ENCODE measurements at regions of chr11 and their contacts with region 1.

Region 1: GRCh38 chr11:65013692-65014145 is 241 bp upstream of the ARL2 start:
- DNase-seq: peak; percentile 74 to 95 (median 89)
- ATAC-seq: peak; percentile 91
- H3K4me3 ChIP-seq: peak overlapping the region; percentile 73 to 94
- H3K4me3 Mint-ChIP-seq: peak overlapping the region; percentile 88
- H3K27ac ChIP-seq: peak overlapping the region; percentile 87 to 100
- H3K27ac Mint-ChIP-seq: peak overlapping the region; percentile 96
- H3K4me1 ChIP-seq: peaks cover 24% of the 10 kb centered on the region
- H3K4me1 Mint-ChIP-seq: peaks cover 24% of the 10 kb centered on the region
- H3K27me3 ChIP-seq: no peaks in the 10 kb centered on the region
- H3K27me3 Mint-ChIP-seq: no peaks in the 10 kb centered on the region
- CTCF ChIP-seq: peak; percentile 58

Region 2: DNA sequence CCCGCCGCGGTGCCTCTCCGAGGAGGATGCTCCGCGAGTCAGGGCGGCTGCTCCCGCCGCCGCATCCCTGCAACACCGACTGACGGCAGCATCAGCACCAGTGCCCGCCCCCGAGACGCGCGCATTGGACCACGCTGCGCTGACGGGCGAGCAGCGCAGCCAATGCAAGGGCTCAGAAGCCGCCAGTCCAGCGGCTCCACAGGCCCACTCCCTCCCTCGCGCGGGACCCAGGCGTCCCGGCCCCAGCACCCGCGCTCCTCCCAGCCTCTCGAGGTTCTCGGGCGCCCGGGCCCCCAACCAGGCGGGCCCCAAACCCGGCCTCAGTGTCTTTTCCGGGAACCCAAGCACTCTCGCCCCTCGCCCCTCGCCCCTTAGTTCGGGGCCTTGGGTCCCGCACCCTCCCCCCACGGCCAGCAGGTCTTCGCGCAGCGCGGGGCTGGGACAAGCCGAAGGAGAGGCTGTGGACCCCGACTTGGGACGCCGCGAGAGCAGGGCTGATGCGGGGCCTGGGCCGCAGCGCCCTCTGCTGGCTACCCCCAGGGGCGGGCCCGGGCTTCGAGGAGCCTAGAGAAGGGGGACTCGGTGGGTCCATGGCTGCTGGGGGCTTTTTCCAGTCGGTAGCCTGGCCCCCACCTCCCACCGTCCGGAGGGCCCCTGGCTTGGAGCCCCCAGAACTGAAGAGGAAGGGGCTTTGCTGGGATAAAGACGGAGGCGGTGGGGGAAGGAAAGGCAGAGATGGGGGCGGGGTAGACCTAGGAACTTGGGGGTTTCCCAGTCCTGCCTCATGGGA is 290.4 kb before region 1 on chr11 and contains the start of gene NRXN2:
- CTCF ChIA-PET with region 1: no interaction called
- POLR2A ChIA-PET with region 1: no interaction called
- intact Hi-C with region 1: loop called in 1 of 2 experiments (anchors 1 kb)
- DNase-seq: peak; percentile 62 to 94 (median 83)
- ATAC-seq: peak; percentile 94
- H3K4me3 ChIP-seq: peak within 1 kb of the TSS; percentile 71 to 78
- H3K4me3 Mint-ChIP-seq: peak within 1 kb of the TSS; percentile 70
- H3K27ac ChIP-seq: peak within 1 kb of the TSS; percentile 49 to 71
- H3K27ac Mint-ChIP-seq: no peak within 1 kb of the TSS
- H3K4me1 ChIP-seq: peaks cover 21% of the 10 kb centered on the region
- H3K4me1 Mint-ChIP-seq: peaks cover 18% of the 10 kb centered on the region
- H3K27me3 ChIP-seq: peaks cover 0 to 7% of the 10 kb centered on the region in 2 experiments
- H3K27me3 Mint-ChIP-seq: peaks cover 9% of the 10 kb centered on the region
- CTCF ChIP-seq: peak; percentile 97
- total RNA-seq, gene NRXN2: 0.17 to 0.43 TPM

Region 3: DNA sequence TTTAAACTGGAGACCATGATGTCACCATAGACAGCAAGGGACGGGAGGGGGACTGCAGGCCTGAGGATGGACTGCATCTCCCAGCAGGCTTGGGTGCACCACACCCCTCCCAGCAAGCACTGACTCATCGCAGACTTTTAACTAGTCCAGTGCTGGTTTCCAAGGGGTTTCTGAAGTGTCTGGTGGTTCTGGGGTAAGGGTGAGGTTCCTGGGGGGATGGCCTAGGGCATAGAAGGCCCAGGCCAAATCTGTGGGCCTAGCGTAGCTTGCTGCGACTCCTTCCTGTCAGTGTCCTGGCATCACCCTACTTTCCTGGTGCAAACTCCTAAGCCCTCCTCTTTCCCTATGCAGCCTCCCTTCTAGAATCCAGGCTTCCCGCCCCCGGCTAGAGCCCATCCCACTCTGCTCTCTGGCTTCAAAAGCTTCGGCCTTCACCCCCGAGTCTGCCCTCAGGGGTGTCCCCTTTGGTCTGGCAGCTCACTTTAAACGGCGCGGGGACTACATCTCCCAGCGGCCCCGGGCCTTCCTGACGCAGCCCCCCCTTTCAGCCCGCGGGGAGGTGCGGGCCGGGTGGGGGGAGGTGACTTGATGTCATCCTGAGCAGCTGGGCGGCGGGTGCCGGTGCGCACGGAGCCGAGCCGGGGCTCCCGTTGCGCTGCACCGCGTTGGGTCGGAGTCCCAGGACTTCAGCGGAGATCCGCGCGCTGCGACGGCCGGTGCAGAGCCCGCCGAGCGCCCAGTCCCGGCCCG is 89.4 kb before region 1 on chr11 and contains the start of gene PPP2R5B:
- CTCF ChIA-PET with region 1: no interaction called
- POLR2A ChIA-PET with region 1: interaction called, 8 read pairs
- intact Hi-C with region 1: loop called (anchors 1 kb)
- DNase-seq: peak; percentile 78 to 94 (median 90)
- ATAC-seq: peak; percentile 94
- H3K4me3 ChIP-seq: peak within 1 kb of the TSS; percentile 69 to 76
- H3K4me3 Mint-ChIP-seq: peak within 1 kb of the TSS; percentile 95
- H3K27ac ChIP-seq: peak within 1 kb of the TSS; percentile 58 to 92
- H3K27ac Mint-ChIP-seq: peak within 1 kb of the TSS; percentile 96
- H3K4me1 ChIP-seq: peaks cover 19% of the 10 kb centered on the region
- H3K4me1 Mint-ChIP-seq: peaks cover 15% of the 10 kb centered on the region
- H3K27me3 ChIP-seq: no peaks in the 10 kb centered on the region
- H3K27me3 Mint-ChIP-seq: no peaks in the 10 kb centered on the region
- CTCF ChIP-seq: no peak
- total RNA-seq, gene PPP2R5B: 14.8 to 18.0 TPM

Region 4: GRCh38 chr11:65040847-65041621 is 27.3 kb after region 1 on chr11 and contains the start of gene SAC3D1:
- CTCF ChIA-PET with region 1: interaction called, 19 read pairs
- POLR2A ChIA-PET with region 1: interaction called, 3 read pairs
- intact Hi-C with region 1: loop called (anchors 1 kb)
- DNase-seq: peak; percentile 67 to 94 (median 85)
- ATAC-seq: peak; percentile 90
- H3K4me3 ChIP-seq: peak within 1 kb of the TSS; percentile 63 to 76
- H3K4me3 Mint-ChIP-seq: peak within 1 kb of the TSS; percentile 93
- H3K27ac ChIP-seq: peak within 1 kb of the TSS; percentile 34 to 82
- H3K27ac Mint-ChIP-seq: peak within 1 kb of the TSS; percentile 91
- H3K4me1 ChIP-seq: peaks cover 17% of the 10 kb centered on the region
- H3K4me1 Mint-ChIP-seq: peaks cover 15% of the 10 kb centered on the region
- H3K27me3 ChIP-seq: no peaks in the 10 kb centered on the region
- H3K27me3 Mint-ChIP-seq: no peaks in the 10 kb centered on the region
- CTCF ChIP-seq: no peak
- total RNA-seq, gene SAC3D1: 0.57 to 0.94 TPM

Region 5: DNA sequence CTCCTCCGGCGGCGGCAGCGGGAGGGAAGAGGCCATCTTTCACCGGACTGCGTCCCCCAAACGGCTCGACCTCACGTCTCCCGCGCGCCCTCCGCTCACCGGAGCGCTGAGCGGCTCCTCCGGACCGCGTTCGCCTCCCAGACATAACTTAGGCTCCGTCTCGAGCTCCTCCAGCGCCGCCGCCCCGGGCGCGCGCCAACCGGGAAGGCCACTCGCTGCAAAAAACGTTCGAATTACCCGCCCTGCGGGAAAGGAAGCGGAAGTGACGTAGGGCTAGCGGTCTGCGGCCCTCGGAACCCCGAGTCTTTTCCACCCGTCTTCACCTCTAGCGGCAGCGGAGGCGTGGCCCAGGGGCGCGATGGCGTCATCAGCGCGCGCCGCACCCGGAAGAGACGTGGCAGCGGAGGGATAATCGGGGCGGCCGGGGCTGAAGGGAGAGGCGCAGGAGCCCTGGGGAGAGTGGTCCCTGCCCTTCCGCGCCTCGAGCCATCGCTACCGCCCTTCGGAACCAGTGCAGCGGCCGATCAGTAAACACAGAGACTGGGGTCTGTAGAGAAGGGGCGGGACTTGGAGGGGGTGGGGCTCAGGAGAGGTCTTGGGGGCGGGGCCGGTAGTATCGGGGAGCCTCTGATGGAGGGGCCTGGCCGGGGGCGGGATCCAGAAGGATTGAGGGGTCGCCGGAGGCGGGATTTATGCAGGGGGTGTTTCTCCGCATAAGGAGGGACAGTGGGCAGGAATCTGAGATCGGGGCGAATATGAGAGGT is 70.3 kb after region 1 on chr11 and contains the starts of genes CDCA5 and ZFPL1:
- CTCF ChIA-PET with region 1: interaction called, 11 read pairs
- POLR2A ChIA-PET with region 1: no interaction called
- intact Hi-C with region 1: loop called (anchors 1 kb)
- DNase-seq: peak; percentile 94 to 98 (median 96)
- ATAC-seq: peak; percentile 88
- H3K4me3 ChIP-seq: peak within 1 kb of the TSS; percentile 71 to 87
- H3K4me3 Mint-ChIP-seq: peak within 1 kb of the TSS; percentile 93
- H3K27ac ChIP-seq: peak within 1 kb of the TSS; percentile 90 to 97
- H3K27ac Mint-ChIP-seq: peak within 1 kb of the TSS; percentile 99
- H3K4me1 ChIP-seq: peaks cover 17% of the 10 kb centered on the region
- H3K4me1 Mint-ChIP-seq: peaks cover 27% of the 10 kb centered on the region
- H3K27me3 ChIP-seq: no peaks in the 10 kb centered on the region
- H3K27me3 Mint-ChIP-seq: no peaks in the 10 kb centered on the region
- CTCF ChIP-seq: no peak
- total RNA-seq, gene CDCA5: 0.76 to 1.2 TPM
- total RNA-seq, gene ZFPL1: 52.3 to 52.6 TPM

Region 6: GRCh38 chr11:65117216-65118096 is 103.7 kb after region 1 on chr11 and contains the start of gene ZNHIT2:
- CTCF ChIA-PET with region 1: interaction called, 84 read pairs
- POLR2A ChIA-PET with region 1: interaction called, 13 read pairs
- intact Hi-C with region 1: loop called (anchors 1 kb)
- DNase-seq: peak; percentile 99 to 100 (median 100)
- ATAC-seq: peak; percentile 70
- H3K4me3 ChIP-seq: peak within 1 kb of the TSS; percentile 88
- H3K4me3 Mint-ChIP-seq: peak within 1 kb of the TSS; percentile 88
- H3K27ac ChIP-seq: peak within 1 kb of the TSS; percentile 88 to 95
- H3K27ac Mint-ChIP-seq: peak within 1 kb of the TSS; percentile 96
- H3K4me1 ChIP-seq: peaks cover 49% of the 10 kb centered on the region
- H3K4me1 Mint-ChIP-seq: peaks cover 56% of the 10 kb centered on the region
- H3K27me3 ChIP-seq: no peaks in the 10 kb centered on the region
- H3K27me3 Mint-ChIP-seq: no peaks in the 10 kb centered on the region
- CTCF ChIP-seq: peak; percentile 79
- total RNA-seq, gene ZNHIT2: 8.9 to 9.3 TPM

Region 7: DNA sequence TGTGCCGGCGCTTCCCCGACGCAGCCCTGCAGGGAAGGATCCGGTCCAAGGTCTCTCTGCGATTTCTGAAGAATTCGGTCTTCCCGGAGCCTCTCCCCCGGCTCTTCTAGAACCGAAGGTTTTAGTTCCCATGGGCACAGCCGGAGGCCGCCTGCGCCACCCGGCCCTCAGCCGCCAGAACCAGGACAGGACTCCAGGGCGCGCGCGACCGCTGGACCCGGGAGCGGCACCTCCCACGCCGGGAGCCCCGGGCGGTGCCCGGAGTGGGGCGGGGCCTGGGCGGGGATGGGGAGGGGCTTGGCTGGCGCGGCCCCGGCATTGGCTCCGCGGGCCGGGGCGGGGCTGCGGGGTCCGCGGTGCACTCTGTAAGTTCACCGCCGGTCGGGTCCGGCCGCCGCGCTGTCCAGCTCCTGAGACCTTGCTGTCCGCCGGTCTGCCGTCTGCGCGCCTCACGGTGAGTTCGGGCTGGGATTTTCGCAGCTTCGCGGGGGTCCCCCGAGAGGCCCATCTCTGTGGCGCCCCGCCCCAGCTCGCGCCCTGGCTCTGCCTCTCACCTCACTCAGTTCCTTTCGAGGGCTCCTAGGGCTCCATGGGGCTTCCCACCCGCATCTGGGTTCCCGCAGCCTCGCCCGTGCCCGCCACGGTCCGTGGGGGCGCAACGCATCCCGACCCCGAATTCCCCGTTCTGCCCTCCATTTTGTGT is 300.9 kb after region 1 on chr11 and contains the start of gene CDC42EP2:
- CTCF ChIA-PET with region 1: interaction called, 9 read pairs
- POLR2A ChIA-PET with region 1: no interaction called
- intact Hi-C with region 1: loop called (anchors 10 kb)
- DNase-seq: peak; percentile 45 to 83 (median 72)
- ATAC-seq: peak; percentile 90
- H3K4me3 ChIP-seq: peak within 1 kb of the TSS; percentile 73 to 81
- H3K4me3 Mint-ChIP-seq: peak within 1 kb of the TSS; percentile 80
- H3K27ac ChIP-seq: no peak within 1 kb of the TSS
- H3K27ac Mint-ChIP-seq: no peak within 1 kb of the TSS
- H3K4me1 ChIP-seq: peaks cover 15% of the 10 kb centered on the region
- H3K4me1 Mint-ChIP-seq: peaks cover 7% of the 10 kb centered on the region
- H3K27me3 ChIP-seq: peaks cover 0 to 5% of the 10 kb centered on the region in 2 experiments
- H3K27me3 Mint-ChIP-seq: no peaks in the 10 kb centered on the region
- CTCF ChIP-seq: no peak
- total RNA-seq, gene CDC42EP2: 0.67 to 0.76 TPM

Region 8: DNA sequence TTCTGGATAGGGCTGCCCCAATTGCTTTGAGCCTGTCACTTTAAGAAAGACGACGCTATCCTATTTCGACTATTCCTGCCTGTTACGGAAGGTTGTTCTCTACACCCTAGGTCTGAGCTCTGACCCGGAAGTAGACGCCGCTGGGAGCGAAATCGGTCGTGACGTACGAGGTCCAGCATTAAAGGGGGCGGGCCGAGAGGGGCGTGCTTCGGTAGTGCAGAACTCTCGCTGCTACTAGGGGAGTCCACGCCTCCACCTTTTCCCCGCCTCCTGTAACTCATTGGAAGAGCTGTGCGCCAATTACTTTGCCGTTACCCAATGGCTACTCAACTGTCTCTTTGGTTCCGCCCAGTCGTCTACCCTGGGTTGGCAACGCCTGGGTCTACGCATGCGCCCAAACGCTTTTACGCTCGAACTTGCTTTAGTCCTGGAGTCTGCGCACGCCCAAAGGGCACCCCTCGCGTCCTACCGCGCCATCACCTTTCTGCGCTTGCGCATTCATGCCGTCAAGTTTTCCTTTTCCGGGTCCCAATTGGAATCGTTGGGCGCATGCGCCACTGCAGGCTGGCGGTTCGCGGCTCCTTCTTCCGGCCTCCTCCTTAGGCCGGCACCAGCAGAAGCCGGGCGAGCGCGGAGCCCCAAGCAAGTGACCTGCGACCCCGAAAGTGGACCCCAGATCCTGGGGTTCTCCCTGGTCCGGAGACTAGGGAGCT is 601.7 kb after region 1 on chr11 and contains the start of gene PCNX3:
- CTCF ChIA-PET with region 1: no interaction called
- POLR2A ChIA-PET with region 1: no interaction called
- intact Hi-C with region 1: no loop called
- DNase-seq: peak; percentile 99 to 100 (median 100)
- ATAC-seq: peak; percentile 88
- H3K4me3 ChIP-seq: peak within 1 kb of the TSS; percentile 78 to 89
- H3K4me3 Mint-ChIP-seq: peak within 1 kb of the TSS; percentile 96
- H3K27ac ChIP-seq: peak within 1 kb of the TSS; percentile 92 to 97
- H3K27ac Mint-ChIP-seq: peak within 1 kb of the TSS; percentile 96
- H3K4me1 ChIP-seq: peaks cover 46% of the 10 kb centered on the region
- H3K4me1 Mint-ChIP-seq: peaks cover 45% of the 10 kb centered on the region
- H3K27me3 ChIP-seq: no peaks in the 10 kb centered on the region
- H3K27me3 Mint-ChIP-seq: no peaks in the 10 kb centered on the region
- CTCF ChIP-seq: no peak
- total RNA-seq, gene PCNX3: 52.7 to 56.4 TPM

Measured in CD8-positive, alpha-beta T cell (primary cell).